Activated CD4-positive, alpha-beta memory T cell treated with anti-CD3 and anti-CD28 coated beads for 36 hours (primary cell): ENCODE measurements at regions of chr4 and their contacts with region 1.

Region 1: DNA sequence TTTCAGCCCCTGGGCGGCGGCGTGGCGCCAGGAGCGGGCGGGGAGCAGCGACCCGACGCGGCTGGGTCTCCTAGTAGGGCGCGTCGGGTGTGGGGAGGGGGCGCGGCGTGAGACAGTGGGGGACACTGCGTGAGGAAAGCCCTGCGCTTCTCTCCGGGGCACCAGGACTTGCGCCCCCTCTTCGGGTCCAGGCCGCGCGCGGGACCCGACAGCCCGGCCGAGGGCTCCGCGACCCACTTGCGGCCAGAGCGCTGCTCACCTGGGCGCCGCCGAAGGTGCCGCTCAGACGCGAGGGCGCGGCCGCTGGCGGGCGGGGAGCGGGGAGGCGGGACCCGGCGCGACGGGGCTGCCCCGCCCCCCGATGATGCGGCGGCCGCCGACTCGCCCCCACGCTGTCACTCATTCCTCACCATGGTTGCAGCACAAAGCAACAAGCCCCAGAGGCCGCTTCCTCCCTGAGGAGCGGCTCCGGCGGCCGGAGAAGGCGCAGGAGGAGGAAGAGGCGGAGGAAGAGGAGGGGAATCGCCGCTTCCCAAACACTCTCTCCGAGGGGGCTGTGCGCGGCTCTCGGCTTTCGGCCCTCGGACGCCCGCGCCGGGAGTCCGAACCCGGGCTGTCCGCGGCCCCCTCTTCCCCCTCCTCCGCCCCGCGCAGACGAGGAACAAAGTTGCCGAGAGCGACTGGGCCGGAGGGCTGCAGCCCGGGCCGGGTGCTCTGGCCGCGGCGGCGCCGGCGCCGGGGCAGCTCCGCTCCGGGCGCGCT is at the start of gene RAPGEF2:
- DNase-seq: peak; percentile 91
- H3K4me3 Mint-ChIP-seq: peak within 1 kb of the TSS; percentile 79
- H3K27ac Mint-ChIP-seq: peak within 1 kb of the TSS; percentile 81
- H3K4me1 Mint-ChIP-seq: peaks cover 46% of the 10 kb centered on the region
- H3K27me3 Mint-ChIP-seq: peaks cover 5% of the 10 kb centered on the region
- total RNA-seq, gene RAPGEF2: 18.6 to 22.0 TPM

Region 2: DNA sequence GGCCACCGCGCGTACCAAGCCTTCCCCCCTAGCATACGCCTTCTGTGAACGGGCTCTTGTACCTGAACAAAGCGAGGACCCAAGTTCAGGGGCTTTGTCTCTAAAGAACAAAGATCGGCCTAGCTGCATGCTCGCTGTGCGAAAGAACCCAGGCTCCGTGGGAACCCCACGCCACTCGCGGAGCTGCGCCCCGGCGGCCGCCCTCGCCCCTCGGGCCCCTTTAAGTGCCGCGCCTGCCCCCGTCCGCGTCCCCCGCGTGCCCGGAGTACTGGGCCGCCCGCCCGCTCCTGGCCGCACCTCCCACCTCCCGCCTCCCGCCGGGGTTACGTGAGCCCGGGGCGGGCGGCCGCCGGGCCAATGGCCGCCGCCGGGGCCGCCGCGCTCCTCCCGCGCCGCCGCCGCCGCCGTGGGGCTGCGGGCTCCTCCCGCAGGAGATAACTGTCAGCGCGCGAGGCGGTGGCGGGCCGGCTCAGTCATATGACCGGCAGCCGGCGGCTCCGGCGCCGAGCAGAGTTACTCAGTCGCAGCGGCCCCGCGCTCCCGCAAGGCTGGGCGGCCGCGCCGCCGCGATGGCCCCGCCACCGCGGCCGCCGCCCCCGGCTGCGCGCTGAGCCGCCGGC is 334.1 kb before region 1 on chr4 and contains the start of gene FNIP2:
- CTCF ChIA-PET with region 1: no interaction called
- POLR2A ChIA-PET with region 1: no interaction called
- intact Hi-C with region 1: loop called (anchors 2 kb)
- DNase-seq: peak; percentile 73
- H3K4me3 Mint-ChIP-seq: peak within 1 kb of the TSS; percentile 100
- H3K27ac Mint-ChIP-seq: peak within 1 kb of the TSS; percentile 91
- H3K4me1 Mint-ChIP-seq: peaks cover 43% of the 10 kb centered on the region
- H3K27me3 Mint-ChIP-seq: peaks cover 2% of the 10 kb centered on the region
- total RNA-seq, gene FNIP2: 17.7 to 19.4 TPM